Activated B cell treated with CpG ODN at 0.5 μM for 24 hours (primary cell): ENCODE measurements at regions of chr4 and their contacts with region 1.

Region 1: GRCh38 chr4:36414248-36414647 is 132.8 kb downstream of the DTHD1 start:
- DNase-seq: no peak
- ATAC-seq: no peak
- H3K4me3 Mint-ChIP-seq: no peak overlapping the region
- H3K27ac Mint-ChIP-seq: no peak overlapping the region
- H3K4me1 Mint-ChIP-seq: no peaks in the 10 kb centered on the region
- H3K27me3 Mint-ChIP-seq: peaks cover 41% of the 10 kb centered on the region
- CTCF ChIP-seq: no peak

Region 2: DNA sequence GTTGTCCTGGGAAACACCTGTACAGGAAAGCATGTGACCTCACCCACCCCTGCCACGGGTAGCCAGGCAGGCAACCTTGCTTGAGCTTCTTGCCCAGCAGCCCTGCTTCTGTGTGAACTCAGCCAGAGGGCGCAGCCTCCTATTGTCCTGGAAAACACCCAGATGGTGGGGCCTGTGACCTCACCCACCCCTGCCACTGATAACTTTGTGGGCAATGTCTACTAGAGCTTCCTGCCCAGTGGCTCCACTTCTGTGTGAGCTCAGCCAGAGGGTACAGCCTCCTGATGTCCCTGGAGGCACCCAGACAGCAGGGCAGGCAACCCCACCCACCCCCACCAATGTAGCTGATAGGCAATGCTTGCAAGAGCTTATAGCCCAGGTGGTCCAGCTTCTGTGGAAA is 13.4 kb after region 1 on chr4:
- CTCF ChIA-PET with region 1: no interaction called
- POLR2A ChIA-PET with region 1: no interaction called
- intact Hi-C with region 1: no loop called
- DNase-seq: no peak
- ATAC-seq: no peak
- H3K4me3 Mint-ChIP-seq: no peak overlapping the region
- H3K27ac Mint-ChIP-seq: no peak overlapping the region
- H3K4me1 Mint-ChIP-seq: peaks cover 11% of the 10 kb centered on the region
- H3K27me3 Mint-ChIP-seq: peaks cover 5% of the 10 kb centered on the region
- CTCF ChIP-seq: no peak

Region 3: DNA sequence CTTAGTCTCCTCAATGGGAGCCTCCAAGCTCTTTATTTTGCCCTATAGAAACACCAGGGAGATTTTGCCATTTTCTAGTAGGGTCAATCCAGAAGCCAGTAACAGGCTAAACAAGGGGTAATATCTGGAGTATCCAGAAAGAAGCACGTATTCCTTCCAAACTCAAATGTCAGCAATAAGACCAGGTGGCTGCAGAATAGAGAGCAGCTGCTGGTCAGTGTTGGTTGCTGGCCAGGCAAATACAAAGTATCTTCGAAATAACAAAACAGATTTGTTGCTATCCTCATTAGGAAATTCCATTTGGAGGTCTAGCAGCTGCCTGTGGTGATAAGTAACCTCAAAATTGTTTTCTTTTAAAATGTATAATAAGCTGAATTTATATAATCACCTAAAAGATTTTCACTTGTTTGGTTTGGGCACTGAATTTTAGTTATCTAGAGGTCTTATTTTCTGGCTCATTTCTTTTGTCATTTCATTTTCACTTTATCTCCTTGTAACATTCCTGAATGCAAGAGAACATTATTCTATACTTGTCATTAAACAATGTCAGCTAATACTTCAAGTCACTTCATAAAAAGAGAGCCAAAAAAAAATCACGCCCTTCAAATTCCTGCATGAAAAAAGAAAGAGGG is 187.7 kb after region 1 on chr4:
- CTCF ChIA-PET with region 1: no interaction called
- POLR2A ChIA-PET with region 1: no interaction called
- intact Hi-C with region 1: no loop called
- DNase-seq: no peak
- ATAC-seq: no peak
- H3K4me3 Mint-ChIP-seq: no peak overlapping the region
- H3K27ac Mint-ChIP-seq: no peak overlapping the region
- H3K4me1 Mint-ChIP-seq: no peaks in the 10 kb centered on the region
- H3K27me3 Mint-ChIP-seq: no peaks in the 10 kb centered on the region
- CTCF ChIP-seq: no peak

Region 4: GRCh38 chr4:37389967-37390580 is 975.8 kb after region 1 on chr4:
- CTCF ChIA-PET with region 1: no interaction called
- POLR2A ChIA-PET with region 1: no interaction called
- intact Hi-C with region 1: loop called (anchors 10 kb)
- DNase-seq: no peak
- ATAC-seq: no peak
- H3K4me3 Mint-ChIP-seq: no peak overlapping the region
- H3K27ac Mint-ChIP-seq: no peak overlapping the region
- H3K4me1 Mint-ChIP-seq: no peaks in the 10 kb centered on the region
- H3K27me3 Mint-ChIP-seq: peaks cover 9% of the 10 kb centered on the region
- CTCF ChIP-seq: peak; percentile 21